ENCODE measurements at regions of chr4 and their contacts with region 1.

Region 1: GRCh38 chr4:142883040-142883832 is 37.1 kb upstream of the INPP4B start:
- DNase-seq: no peak

Region 2: GRCh38 chr4:142944562-142944961 is 61.3 kb after region 1 on chr4:
- intact Hi-C with region 1: no loop called
- DNase-seq: no peak

Region 3: GRCh38 chr4:143025081-143025704 is 142.0 kb after region 1 on chr4:
- intact Hi-C with region 1: loop called (anchors 5 kb)
- DNase-seq: no peak